Stomach (tissue), 19 donors: ENCODE measurements at regions of chr18 and their contacts with region 1.

Region 1: GRCh38 chr18:69705987-69706386 is 241.7 kb downstream of the CD226 start:
- DNase-seq: no peak
- H3K4me3 ChIP-seq: no peak overlapping the region
- H3K27ac ChIP-seq: no peak overlapping the region
- H3K4me1 ChIP-seq: no peaks in the 10 kb centered on the region
- H3K27me3 ChIP-seq: no peaks in the 10 kb centered on the region
- CTCF ChIP-seq: no peak
- EP300 ChIP-seq: no peak
- POLR2A ChIP-seq: no peak

Region 2: DNA sequence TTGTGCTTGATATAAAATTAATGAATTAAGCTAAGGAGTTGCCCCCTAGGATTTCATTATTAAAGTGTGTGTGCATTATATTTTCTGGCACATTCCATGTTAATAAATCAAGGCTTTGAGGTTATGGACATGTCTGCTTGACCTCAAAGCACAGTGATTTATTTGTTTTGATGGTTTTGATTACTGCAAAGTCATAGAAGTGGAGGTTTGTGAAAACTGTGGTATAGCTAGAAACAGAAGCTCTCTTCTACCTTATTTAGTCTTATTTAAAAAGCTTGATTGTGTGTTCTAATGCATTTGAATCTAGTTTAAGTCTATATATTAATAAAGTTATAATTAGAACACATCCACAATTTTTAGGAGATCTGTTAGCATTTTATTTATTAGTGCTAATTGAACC is 273.1 kb before region 1 on chr18:
- intact Hi-C with region 1: no loop called
- DNase-seq: no peak
- H3K4me3 ChIP-seq: no peak overlapping the region
- H3K27ac ChIP-seq: no peak overlapping the region
- H3K4me1 ChIP-seq: no peaks in the 10 kb centered on the region
- H3K27me3 ChIP-seq: no peaks in the 10 kb centered on the region
- CTCF ChIP-seq: no peak
- EP300 ChIP-seq: no peak
- POLR2A ChIP-seq: no peak

Region 3: GRCh38 chr18:69648486-69648885 is 57.5 kb before region 1 on chr18:
- intact Hi-C with region 1: loop called (anchors 10 kb)
- DNase-seq: peak in 1 of 2 donors; percentile 45
- H3K4me3 ChIP-seq: no peak overlapping the region
- H3K27ac ChIP-seq: no peak overlapping the region
- H3K4me1 ChIP-seq: no peaks in the 10 kb centered on the region
- H3K27me3 ChIP-seq: no peaks in the 10 kb centered on the region
- CTCF ChIP-seq: no peak
- EP300 ChIP-seq: no peak
- POLR2A ChIP-seq: no peak